ENCODE measurements at regions of chr7 and their contacts with region 1.

Region 1: DNA sequence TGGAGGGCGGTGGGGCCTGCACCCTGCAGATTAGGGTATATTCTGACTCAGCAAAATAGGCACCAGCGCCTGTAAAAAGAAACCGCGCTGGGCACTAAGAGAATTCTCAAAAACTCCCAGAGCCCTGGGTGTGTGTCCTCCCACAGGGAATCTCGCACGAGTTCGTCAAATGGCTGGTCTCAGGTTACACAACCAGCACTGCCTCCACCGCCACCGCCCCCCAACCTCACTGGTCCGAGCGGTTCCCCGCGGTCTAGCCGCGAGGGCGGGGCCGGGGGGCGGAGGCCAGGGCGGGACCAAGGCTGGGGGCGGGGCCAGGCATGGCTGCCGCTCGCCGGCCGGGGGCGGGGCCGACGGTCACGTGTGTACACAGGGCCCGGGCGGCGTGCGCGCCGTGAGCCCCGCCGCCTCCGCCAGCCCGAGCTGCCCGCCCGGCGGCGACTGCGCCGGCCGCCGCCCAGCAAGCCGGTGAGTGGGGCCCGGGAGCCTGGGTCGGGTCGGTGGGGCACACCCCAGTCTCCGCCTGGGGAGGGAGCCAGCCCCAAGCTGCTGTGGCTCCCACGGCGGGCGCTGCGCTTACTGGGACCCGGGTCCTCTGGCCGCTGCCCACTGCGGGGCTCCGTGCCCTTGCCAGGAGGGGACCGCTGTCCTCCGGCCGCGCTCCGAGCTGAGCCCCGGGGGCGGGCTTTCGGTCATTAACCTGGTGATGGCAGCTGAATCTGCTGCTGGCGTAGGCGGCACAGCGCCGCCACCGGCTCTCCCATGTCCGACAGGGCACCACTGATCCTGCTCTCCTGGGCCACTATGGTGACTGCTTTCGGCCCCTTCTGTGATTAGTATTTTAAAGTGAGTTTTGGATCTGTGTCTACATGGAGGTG is at the start of gene GPR146:
- DNase-seq: peak; percentile 97
- H3K4me3 ChIP-seq: peak within 1 kb of the TSS; percentile 61 to 63
- H3K27ac ChIP-seq: peak within 1 kb of the TSS; percentile 92 to 94
- H3K4me1 ChIP-seq: peaks cover 29% of the 10 kb centered on the region
- H3K27me3 ChIP-seq: no peaks in the 10 kb centered on the region
- CTCF ChIP-seq: peak in 2 of 4 experiments; percentile 57 to 74
- POLR2A ChIP-seq: peak; percentile 53
- total RNA-seq, gene GPR146: 6.1 to 25.9 TPM

Region 2: GRCh38 chr7:1028031-1028770 is 16.2 kb before region 1 on chr7:
- intact Hi-C with region 1: loop called (anchors 2 kb)
- DNase-seq: peak; percentile 84
- H3K4me3 ChIP-seq: peak overlapping the region; percentile 81 to 86
- H3K27ac ChIP-seq: peak overlapping the region; percentile 87 to 92
- H3K4me1 ChIP-seq: peaks cover 7% of the 10 kb centered on the region
- H3K27me3 ChIP-seq: no peaks in the 10 kb centered on the region
- CTCF ChIP-seq: no peak
- POLR2A ChIP-seq: peak; percentile 86